Activated T-helper 2 cell treated with anti-CD3 and anti-CD28 coated beads, Interferon-gamma antibody, Interleukin-2, Interleukin-4, amounts not matched to agents 10 μg/mL and 5 μg/mL and 100 μg/mL, durations not matched to agents 14 hours and 24 hours and 36 hours (primary cell): ENCODE measurements at regions of chr13 and their contacts with region 1.

Region 1: GRCh38 chr13:46605825-46606554 is 53.0 kb downstream of the LRCH1 start:
- DNase-seq: no peak
- H3K4me3 Mint-ChIP-seq: no peak overlapping the region
- H3K27ac Mint-ChIP-seq: peak overlapping the region; percentile 51
- H3K4me1 Mint-ChIP-seq: peaks cover 47% of the 10 kb centered on the region
- H3K27me3 Mint-ChIP-seq: no peaks in the 10 kb centered on the region

Region 2: DNA sequence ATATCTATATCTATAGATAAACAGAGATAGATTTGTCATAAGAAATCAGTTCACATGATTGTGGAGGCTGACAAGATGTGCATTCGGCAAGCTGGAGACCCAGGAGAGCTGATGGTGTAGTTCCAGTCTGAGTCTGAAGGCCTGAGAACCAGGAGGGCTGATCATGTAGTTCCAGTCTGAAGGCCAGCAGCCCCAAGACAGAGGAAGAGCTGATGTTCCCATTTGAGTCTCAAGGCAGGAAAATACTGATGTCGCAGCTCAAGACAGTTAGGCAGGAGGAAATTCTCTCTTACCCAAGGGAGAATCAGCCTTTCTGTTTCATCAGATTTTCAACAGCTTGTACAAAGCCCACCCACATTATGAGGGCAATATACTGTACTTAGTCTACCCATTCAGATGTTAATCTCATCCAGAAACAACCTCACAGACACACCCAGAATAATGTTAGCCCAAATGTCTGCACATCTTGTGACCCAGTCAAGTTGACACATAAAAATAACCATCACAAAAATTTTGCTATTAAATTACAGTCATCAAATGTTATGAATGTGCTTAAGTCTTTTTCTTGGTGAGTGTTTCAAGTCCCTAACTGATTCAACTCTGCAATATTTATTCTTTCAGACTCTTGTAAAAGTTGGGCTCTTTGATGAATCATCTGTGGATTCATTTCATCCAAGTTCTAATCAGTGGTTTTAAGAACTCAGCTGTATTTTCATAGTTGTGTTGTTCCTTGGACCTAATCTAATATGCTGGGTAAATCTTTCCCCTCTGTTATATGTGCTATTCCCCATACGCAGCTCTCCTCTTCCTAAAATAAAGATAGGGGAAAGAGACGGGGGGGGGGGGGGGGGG is 75.7 kb before region 1 on chr13:
- intact Hi-C with region 1: loop called (anchors 1 kb)
- DNase-seq: no peak
- H3K4me3 Mint-ChIP-seq: no peak overlapping the region
- H3K27ac Mint-ChIP-seq: peak overlapping the region; percentile 75
- H3K4me1 Mint-ChIP-seq: peaks cover 39% of the 10 kb centered on the region
- H3K27me3 Mint-ChIP-seq: peaks cover 9% of the 10 kb centered on the region

Region 3: GRCh38 chr13:46577696-46578589 is 28.0 kb before region 1 on chr13:
- intact Hi-C with region 1: loop called (anchors 2 kb)
- DNase-seq: no peak
- H3K4me3 Mint-ChIP-seq: no peak overlapping the region
- H3K27ac Mint-ChIP-seq: peak overlapping the region; percentile 10
- H3K4me1 Mint-ChIP-seq: peaks cover 53% of the 10 kb centered on the region
- H3K27me3 Mint-ChIP-seq: no peaks in the 10 kb centered on the region

Region 4: DNA sequence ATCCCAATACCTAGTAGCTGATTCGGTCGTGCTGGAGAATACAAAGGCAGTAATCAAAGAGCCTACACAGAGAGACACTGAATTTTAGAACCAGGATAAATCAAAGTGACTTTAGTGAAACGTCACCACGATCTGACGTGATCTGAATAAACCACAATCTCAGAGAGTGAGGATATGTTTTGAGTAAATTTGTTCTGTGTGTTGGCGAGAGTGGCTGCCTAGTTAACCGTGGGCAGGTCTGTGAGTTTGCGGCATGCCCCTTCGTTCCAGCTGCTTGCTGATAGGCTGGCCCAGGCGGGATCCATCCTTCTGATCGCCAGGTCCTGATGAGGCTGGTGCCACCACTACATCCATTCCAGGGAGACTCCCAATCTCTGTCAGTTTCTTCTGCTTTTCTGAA is 12.6 kb before region 1 on chr13:
- intact Hi-C with region 1: loop called (anchors 2 kb)
- DNase-seq: peak; percentile 15
- H3K4me3 Mint-ChIP-seq: no peak overlapping the region
- H3K27ac Mint-ChIP-seq: peak overlapping the region; percentile 3
- H3K4me1 Mint-ChIP-seq: peaks cover 51% of the 10 kb centered on the region
- H3K27me3 Mint-ChIP-seq: peaks cover 6% of the 10 kb centered on the region